CD8-positive, alpha-beta memory T cell (primary cell): ENCODE measurements at regions of chr19 and their contacts with region 1.

Region 1: GRCh38 chr19:18521885-18522624 is at the start of gene ELL:
- DNase-seq: peak; percentile 100
- H3K4me3 ChIP-seq: peak within 1 kb of the TSS; percentile 76
- H3K4me3 Mint-ChIP-seq: peak within 1 kb of the TSS; percentile 87 to 98 (median 94)
- H3K27ac ChIP-seq: peak within 1 kb of the TSS; percentile 92
- H3K27ac Mint-ChIP-seq: peak within 1 kb of the TSS; percentile 79 to 100 (median 98)
- H3K4me1 ChIP-seq: peaks cover 14% of the 10 kb centered on the region
- H3K4me1 Mint-ChIP-seq: peaks cover 21 to 29% (median 25%) of the 10 kb centered on the region in 3 donors
- H3K27me3 ChIP-seq: no peaks in the 10 kb centered on the region
- H3K27me3 Mint-ChIP-seq: peaks cover 0 to 2% of the 10 kb centered on the region in 2 donors
- total RNA-seq, gene ELL: 24.4 to 25.5 TPM

Region 2: GRCh38 chr19:18450931-18451845 is 70.9 kb before region 1 on chr19:
- CTCF ChIA-PET with region 1: interaction called, 12 read pairs
- POLR2A ChIA-PET with region 1: no interaction called
- DNase-seq: peak; percentile 78 to 89 (median 83)
- H3K4me3 ChIP-seq: no peak overlapping the region
- H3K4me3 Mint-ChIP-seq: peak overlapping the region in 1 of 7 donors; percentile 84
- H3K27ac ChIP-seq: no peak overlapping the region
- H3K27ac Mint-ChIP-seq: peak overlapping the region in 5 of 8 donors; percentile 14 to 94 (median 80)
- H3K4me1 ChIP-seq: no peaks in the 10 kb centered on the region
- H3K4me1 Mint-ChIP-seq: peaks cover 4 to 8% (median 5%) of the 10 kb centered on the region in 3 donors
- H3K27me3 ChIP-seq: no peaks in the 10 kb centered on the region
- H3K27me3 Mint-ChIP-seq: no peaks in the 10 kb centered on the region

Region 3: DNA sequence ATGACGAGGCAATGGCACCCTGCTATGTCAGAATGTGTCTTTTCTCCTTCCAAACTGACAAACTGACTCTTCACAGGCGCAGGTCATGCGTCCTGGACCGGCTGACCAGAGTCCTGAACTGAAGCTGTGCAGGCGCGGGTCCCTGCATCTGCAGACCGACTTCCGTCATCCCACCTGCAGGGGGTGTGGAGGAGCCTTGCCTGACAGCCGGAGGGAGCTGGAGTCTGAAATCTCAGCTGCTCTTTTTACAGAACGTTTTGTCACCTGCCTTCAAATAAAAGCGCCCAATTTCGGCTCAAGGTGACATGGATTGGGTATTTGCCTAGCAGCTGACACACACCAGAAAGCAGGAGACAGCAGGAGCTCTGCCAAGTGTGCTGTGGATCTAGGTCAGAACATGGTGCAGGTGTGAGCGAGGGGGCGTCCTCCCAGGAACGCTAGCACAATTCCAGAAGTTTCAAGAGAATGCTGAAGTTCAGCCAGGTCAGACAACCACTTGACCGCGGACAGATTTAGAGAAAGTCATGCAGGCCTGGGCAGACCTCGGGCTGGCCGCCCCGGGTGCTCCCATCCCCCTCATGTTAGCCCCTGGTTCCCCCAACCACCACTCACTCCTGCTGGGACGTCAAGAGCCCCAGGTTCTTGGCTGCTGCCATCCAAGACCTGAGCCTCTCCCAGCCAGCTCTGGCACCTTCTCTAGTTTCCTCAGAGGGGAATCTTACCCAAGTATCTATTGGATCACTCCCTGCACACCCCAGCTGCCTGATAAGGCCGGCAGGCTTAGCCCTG is 33.0 kb before region 1 on chr19:
- CTCF ChIA-PET with region 1: interaction called, 71 read pairs
- POLR2A ChIA-PET with region 1: interaction called, 38 read pairs
- DNase-seq: no peak
- H3K4me3 ChIP-seq: no peak overlapping the region
- H3K4me3 Mint-ChIP-seq: peak overlapping the region in 1 of 7 donors; percentile 55
- H3K27ac ChIP-seq: no peak overlapping the region
- H3K27ac Mint-ChIP-seq: peak overlapping the region in 5 of 8 donors; percentile 51 to 100 (median 77)
- H3K4me1 ChIP-seq: peaks cover 64% of the 10 kb centered on the region
- H3K4me1 Mint-ChIP-seq: peaks cover 65 to 96% (median 80%) of the 10 kb centered on the region in 3 donors
- H3K27me3 ChIP-seq: no peaks in the 10 kb centered on the region
- H3K27me3 Mint-ChIP-seq: no peaks in the 10 kb centered on the region

Region 4: DNA sequence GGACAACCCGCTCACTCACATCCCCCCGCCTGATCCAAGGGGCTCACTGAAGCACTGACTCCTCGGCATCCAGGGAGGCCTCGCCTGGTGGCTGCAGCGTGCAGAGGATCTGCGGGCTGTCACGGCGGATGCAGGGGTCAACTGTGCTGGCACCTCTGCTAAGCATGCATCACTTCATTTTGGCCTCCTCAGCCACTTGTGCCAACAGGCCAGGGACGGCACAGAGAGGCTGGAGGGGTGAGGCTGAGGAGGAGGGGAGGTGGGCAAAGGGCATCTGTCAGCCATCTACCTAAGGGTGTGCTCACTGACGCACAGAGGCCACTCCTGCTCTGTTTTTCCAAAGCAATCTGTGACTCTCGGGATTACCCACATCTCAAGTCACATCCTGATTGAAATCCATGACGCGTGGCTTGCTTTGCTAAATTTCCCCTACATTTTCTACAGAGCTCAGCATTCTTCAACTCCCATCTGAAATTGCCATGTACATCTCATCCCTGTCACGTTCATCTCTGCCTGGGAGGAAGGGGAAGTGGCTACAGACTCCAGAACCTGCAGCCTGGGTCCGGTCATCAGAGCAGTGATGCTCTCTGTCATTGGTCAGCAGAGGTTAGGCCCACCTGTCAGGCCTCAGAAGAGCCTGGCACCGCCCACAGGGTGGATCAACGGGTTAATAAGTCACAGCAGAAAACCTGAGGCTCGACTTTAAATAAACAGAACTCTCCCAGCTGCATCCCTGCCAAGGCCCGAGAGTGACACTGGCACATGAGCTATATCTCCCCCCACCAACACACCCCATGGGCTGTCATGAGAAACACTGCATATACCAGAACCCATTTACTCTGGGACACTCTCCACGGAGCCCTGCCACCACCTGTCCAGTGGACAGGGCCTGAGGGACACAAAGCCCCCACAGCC is 17.8 kb before region 1 on chr19:
- CTCF ChIA-PET with region 1: interaction called, 81 read pairs
- POLR2A ChIA-PET with region 1: interaction called, 6 read pairs
- DNase-seq: no peak
- H3K4me3 ChIP-seq: no peak overlapping the region
- H3K4me3 Mint-ChIP-seq: peak overlapping the region in 6 of 7 donors; percentile 21 to 79 (median 72)
- H3K27ac ChIP-seq: no peak overlapping the region
- H3K27ac Mint-ChIP-seq: peak overlapping the region; percentile 78 to 100 (median 94)
- H3K4me1 ChIP-seq: peaks cover 97% of the 10 kb centered on the region
- H3K4me1 Mint-ChIP-seq: peaks cover 90 to 100% (median 91%) of the 10 kb centered on the region in 3 donors
- H3K27me3 ChIP-seq: no peaks in the 10 kb centered on the region
- H3K27me3 Mint-ChIP-seq: peaks cover 0 to 4% of the 10 kb centered on the region in 2 donors

Region 5: DNA sequence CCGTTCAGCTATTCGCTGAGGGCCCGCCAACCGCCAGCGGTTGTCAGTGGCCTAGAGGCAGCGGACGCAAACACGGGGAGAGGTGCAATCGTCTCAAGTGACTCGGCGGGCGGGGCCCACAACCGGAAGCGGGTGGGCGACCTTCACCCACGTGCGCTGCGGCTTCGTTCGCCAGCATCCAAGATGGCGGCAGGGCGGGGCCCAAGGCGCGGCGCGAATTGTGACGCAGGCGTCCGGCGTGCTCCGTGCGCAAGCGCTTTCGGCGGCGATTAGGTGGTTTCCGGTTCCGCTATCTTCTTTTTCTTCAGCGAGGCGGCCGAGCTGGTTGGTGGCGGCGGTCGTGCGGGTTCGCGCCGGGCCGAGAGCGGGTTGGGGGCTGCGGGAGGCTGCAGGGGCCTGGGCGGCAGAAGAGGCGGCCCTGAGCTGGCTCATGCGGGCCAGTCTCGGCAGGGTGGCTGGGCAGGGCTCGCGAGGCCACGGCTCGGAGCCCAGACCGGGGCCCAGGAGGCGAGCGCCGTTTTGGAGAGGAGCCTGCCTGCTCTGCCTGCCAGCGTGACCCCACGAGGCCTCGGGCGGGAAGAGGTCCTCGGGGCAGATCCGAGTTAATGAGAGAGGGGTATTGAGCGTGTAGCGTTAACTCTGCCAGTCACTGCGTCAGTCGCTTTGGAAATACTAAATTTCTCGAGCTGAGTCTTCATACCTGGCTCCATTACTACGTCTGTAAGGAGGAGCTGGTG is 49.7 kb after region 1 on chr19 and contains the start of gene UBA52:
- CTCF ChIA-PET with region 1: interaction called, 27 read pairs
- POLR2A ChIA-PET with region 1: interaction called, 17 read pairs
- DNase-seq: peak; percentile 98 to 99 (median 99)
- H3K4me3 ChIP-seq: peak within 1 kb of the TSS; percentile 77
- H3K4me3 Mint-ChIP-seq: peak within 1 kb of the TSS; percentile 90 to 97 (median 93)
- H3K27ac ChIP-seq: peak within 1 kb of the TSS; percentile 96
- H3K27ac Mint-ChIP-seq: peak within 1 kb of the TSS; percentile 92 to 98 (median 94)
- H3K4me1 ChIP-seq: peaks cover 22% of the 10 kb centered on the region
- H3K4me1 Mint-ChIP-seq: peaks cover 19 to 33% (median 22%) of the 10 kb centered on the region in 3 donors
- H3K27me3 ChIP-seq: no peaks in the 10 kb centered on the region
- H3K27me3 Mint-ChIP-seq: no peaks in the 10 kb centered on the region
- total RNA-seq, gene UBA52: 1,684 to 1,700 TPM